T-cell (primary cell): ENCODE measurements at regions of chr1 and their contacts with region 1.

Region 1: DNA sequence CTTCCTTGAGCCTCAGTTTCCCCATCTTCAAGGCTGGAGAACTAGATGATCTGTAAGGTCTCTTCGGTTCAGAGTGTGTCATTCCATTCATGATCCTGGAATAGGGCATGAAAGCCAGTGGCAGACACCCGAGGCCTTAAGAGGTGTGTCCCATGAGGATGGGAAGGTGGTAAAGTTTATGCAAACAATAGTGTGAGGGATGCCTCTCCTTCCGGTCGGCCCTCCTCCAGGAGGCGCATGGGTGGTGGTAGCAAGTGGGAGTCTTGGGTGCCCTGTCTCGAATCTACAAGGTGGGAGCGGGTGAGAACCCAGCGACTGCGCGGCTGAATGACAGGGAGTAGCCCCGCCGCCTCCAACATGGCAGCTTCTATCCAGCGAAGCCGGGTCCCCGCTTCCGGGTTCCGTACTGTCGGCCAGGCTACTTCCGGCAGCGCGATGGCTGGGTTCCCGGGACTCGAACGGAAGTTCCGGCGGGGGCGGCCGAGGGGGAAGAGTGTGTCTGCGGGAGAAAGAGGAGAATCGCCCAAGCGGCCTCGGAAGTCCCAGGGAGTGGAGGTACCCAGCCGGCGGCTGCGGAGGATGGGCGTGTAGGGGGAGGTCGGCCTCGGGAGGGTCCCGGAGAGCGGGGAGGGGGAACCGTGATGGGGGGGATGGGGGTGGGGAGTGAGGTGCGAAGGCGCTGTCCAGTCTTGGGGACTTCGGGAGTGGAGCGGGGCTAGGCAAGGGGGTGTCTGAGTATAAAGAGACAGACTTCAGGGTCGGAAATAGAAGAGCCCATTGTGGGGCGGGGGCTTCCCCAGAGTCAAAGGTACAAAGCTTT is at the start of gene LYPLA2:
- DNase-seq: peak; percentile 64 to 90 (median 79)
- ATAC-seq: peak; percentile 89 to 93 (median 90)
- H3K4me3 ChIP-seq: peak within 1 kb of the TSS; percentile 72 to 89
- H3K4me3 Mint-ChIP-seq: peak within 1 kb of the TSS; percentile 83 to 94 (median 92)
- H3K27ac ChIP-seq: peak within 1 kb of the TSS; percentile 83
- H3K27ac Mint-ChIP-seq: peak within 1 kb of the TSS; percentile 95 to 96
- H3K4me1 ChIP-seq: peaks cover 2 to 32% of the 10 kb centered on the region in 2 experiments
- H3K4me1 Mint-ChIP-seq: peaks cover 25 to 30% (median 28%) of the 10 kb centered on the region in 3 donors
- H3K27me3 ChIP-seq: no peaks in the 10 kb centered on the region
- H3K27me3 Mint-ChIP-seq: no peaks in the 10 kb centered on the region
- total RNA-seq, gene LYPLA2: 47.8 to 70.9 (median 67.6) TPM

Region 2: DNA sequence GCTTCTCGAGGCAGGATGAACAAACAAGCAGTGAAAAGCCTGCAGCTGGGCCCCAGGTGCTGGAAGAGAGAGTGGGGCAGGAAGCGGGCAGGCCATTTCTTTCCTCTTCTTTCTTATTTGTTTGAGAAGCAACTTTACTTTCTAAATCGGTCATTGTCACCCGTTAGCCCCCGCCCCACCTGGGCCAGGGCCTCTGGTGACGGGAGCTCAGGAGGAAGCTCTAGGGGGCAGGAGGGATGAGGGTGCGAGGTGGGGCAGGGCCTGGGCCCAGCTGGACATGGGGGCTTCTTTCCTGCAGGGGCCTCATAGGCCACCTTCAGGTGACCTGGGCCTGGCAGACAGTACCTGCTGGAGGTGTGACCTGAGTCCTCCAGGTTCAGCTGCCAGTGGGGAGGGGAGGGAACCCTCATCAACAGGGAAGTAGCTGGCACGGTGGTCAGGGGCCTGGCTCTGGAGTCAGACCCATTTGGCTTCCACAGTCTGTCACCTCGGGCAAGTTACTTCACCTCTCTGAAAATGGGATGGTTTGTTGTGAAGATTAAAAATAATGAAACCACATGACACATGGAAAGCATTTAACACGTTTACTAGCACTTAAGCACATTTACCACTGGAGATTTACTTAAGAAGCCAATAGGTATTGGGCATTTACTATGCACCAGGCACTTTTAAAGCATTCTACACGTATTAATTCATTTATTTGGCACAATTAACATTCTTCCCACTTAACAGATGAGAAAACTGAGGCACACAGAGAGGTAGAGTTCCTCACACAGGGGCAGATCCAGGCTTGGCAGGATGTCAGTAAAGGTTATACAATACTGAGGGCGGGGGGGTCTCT is 177.5 kb before region 1 on chr1:
- CTCF ChIA-PET with region 1: no interaction called
- POLR2A ChIA-PET with region 1: no interaction called
- DNase-seq: peak in 32 of 35 experiments; percentile 28 to 70 (median 47)
- ATAC-seq: peak; percentile 63 to 72 (median 70)
- H3K4me3 ChIP-seq: no peak overlapping the region
- H3K4me3 Mint-ChIP-seq: peak overlapping the region in 2 of 3 donors; percentile 39 to 74
- H3K27ac ChIP-seq: peak overlapping the region; percentile 78
- H3K27ac Mint-ChIP-seq: peak overlapping the region; percentile 95 to 99
- H3K4me1 ChIP-seq: peaks cover 50 to 71% of the 10 kb centered on the region in 2 experiments
- H3K4me1 Mint-ChIP-seq: peaks cover 80 to 84% (median 81%) of the 10 kb centered on the region in 3 donors
- H3K27me3 ChIP-seq: peaks cover 0 to 2% of the 10 kb centered on the region in 2 experiments
- H3K27me3 Mint-ChIP-seq: no peaks in the 10 kb centered on the region

Region 3: DNA sequence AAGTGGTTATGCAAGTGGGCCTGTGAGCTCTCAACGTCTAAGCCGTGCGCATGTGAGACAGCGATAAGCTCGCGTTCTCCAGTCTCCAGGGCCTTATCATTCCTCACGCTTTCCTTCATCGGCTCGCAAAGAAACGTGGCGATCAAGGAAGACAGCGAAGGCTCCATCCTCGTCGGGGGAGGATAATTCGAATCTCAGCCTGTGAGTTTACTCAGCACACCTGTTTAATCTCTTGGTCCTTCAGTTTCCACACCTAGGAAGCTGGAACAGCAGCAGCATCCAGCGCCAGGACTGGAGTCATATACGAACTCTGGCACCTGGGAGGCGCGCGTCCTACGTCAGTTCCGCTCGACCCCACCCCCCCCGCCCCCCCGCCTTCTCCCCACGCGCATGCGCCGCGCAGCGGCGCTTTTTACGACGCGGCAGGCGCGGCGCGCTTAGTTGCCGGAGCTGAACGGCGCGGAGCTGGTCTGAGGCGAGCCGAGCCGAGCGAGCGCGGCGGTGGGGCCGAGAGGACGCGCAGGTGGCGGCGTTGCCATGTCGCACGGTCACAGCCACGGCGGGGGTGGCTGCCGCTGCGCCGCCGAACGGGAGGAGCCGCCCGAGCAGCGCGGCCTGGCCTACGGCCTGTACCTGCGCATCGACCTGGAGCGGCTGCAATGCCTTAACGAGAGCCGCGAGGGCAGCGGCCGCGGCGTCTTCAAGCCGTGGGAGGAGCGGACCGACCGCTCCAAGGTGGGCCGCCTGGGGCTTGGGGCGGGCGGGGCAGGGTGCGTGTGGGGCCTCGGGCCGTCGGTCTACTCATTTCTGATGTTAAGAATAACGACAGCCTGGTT is 12.7 kb before region 1 on chr1 and contains the start of gene PITHD1:
- CTCF ChIA-PET with region 1: interaction called in 1 of 2 experiments, 10 read pairs
- POLR2A ChIA-PET with region 1: interaction called, 7 to 10 read pairs
- DNase-seq: peak; percentile 59 to 89 (median 73)
- ATAC-seq: peak; percentile 84 to 86 (median 86)
- H3K4me3 ChIP-seq: peak within 1 kb of the TSS; percentile 70 to 93
- H3K4me3 Mint-ChIP-seq: peak within 1 kb of the TSS; percentile 86 to 93 (median 88)
- H3K27ac ChIP-seq: peak within 1 kb of the TSS; percentile 72
- H3K27ac Mint-ChIP-seq: peak within 1 kb of the TSS; percentile 89 to 93
- H3K4me1 ChIP-seq: peaks cover 16 to 31% of the 10 kb centered on the region in 2 experiments
- H3K4me1 Mint-ChIP-seq: peaks cover 30 to 50% (median 49%) of the 10 kb centered on the region in 3 donors
- H3K27me3 ChIP-seq: no peaks in the 10 kb centered on the region
- H3K27me3 Mint-ChIP-seq: no peaks in the 10 kb centered on the region
- total RNA-seq, gene PITHD1: 60.7 to 87.1 (median 70.8) TPM

Region 4: DNA sequence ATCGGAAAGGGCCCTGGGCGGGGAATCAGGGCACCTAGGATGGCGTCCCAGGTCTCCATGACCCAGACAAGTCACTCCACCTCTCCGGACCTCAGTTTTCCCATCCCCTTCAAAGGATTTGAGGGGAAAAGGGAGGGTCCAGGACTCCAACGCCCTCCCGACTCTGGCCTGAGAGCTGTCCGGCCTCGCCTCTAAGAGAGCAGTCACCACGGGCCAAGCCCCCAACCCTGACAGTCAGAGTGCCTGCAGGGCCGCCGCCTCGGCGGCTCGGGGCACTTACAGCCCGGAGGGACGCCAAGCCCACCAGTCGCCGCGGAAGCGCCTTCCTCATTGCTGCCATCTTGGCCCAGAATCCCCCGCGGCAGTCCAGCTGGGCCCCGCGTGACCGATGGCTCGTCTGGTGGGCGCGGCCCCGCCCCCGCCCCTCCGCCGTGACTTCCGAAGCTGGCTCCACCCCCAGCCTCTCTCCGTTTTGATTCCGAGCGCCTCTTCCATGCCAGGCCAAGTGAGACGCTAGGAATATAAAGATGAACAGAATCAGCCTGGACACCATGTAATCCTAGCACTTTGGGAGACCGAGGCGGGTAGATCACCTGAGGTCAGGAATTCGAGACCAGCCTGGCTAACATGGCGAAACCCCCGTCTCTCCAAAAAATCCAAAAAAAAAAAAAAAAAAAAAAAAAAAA is 34.3 kb after region 1 on chr1 and contains the start of gene HMGCL:
- CTCF ChIA-PET with region 1: interaction called in 1 of 2 experiments, 3 read pairs
- POLR2A ChIA-PET with region 1: interaction called, 7 to 10 read pairs
- DNase-seq: peak; percentile 72 to 91 (median 85)
- ATAC-seq: peak; percentile 93 to 98 (median 98)
- H3K4me3 ChIP-seq: peak within 1 kb of the TSS; percentile 99 to 100
- H3K4me3 Mint-ChIP-seq: peak within 1 kb of the TSS; percentile 93 to 95 (median 94)
- H3K27ac ChIP-seq: peak within 1 kb of the TSS; percentile 96
- H3K27ac Mint-ChIP-seq: peak within 1 kb of the TSS; percentile 95 to 97
- H3K4me1 ChIP-seq: peaks cover 5 to 13% of the 10 kb centered on the region in 2 experiments
- H3K4me1 Mint-ChIP-seq: peaks cover 22 to 34% (median 26%) of the 10 kb centered on the region in 3 donors
- H3K27me3 ChIP-seq: no peaks in the 10 kb centered on the region
- H3K27me3 Mint-ChIP-seq: no peaks in the 10 kb centered on the region
- total RNA-seq, gene HMGCL: 14.5 to 39.0 (median 32.9) TPM